GM10248 (cell line): ENCODE measurements at regions of chr5 and their contacts with region 1.

Region 1: GRCh38 chr5:442335-443238 is at the start of gene EXOC3:
- DNase-seq: peak; percentile 95
- CTCF ChIP-seq: no peak

Region 2: DNA sequence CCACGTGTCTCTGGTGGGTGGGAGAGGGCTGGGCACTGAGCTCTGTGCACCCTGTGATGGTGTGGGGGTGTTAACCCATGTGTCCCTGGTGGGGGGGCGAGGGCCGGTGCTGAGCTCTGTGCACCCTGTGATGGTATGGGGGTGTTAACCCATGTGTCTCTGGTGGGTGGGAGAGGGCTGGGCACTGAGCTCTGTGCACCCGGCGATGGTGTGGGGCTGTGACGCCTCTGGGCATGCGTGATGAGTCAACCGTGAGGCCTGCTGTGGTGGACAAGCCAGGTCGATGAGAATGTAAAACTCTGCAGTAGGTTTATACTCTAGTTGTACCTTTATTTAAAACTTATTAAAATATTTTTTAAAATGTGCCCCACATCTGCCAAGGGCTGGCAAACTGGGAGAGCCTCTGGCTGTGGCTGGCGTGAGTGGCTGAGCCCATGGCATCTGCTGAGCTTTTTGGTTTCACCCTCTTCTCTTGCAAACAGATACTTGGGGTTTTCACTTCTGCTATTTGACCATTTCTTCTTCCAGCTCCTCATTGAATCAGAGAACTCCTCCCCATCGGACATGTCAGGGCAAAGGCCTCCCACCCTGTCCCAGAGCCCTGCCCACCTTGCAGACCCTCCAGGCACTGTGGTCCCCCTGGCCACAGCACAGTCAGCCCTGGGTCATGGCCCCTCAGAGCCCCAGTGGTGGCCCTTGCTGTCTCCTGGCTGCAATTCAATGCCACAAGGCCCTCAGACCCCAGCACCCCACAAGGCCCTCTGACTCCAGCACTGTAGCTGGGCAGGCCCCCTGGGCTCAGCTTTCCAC is 18.1 kb before region 1 on chr5:
- CTCF ChIA-PET with region 1: interaction called, 96 read pairs
- POLR2A ChIA-PET with region 1: no interaction called
- DNase-seq: peak; percentile 86
- CTCF ChIP-seq: no peak

Region 3: GRCh38 chr5:431001-431710 is 11.4 kb before region 1 on chr5:
- CTCF ChIA-PET with region 1: interaction called, 96 read pairs
- POLR2A ChIA-PET with region 1: no interaction called
- DNase-seq: peak; percentile 81
- CTCF ChIP-seq: peak; percentile 92

Region 4: GRCh38 chr5:458547-459353 is 16.2 kb after region 1 on chr5:
- CTCF ChIA-PET with region 1: interaction called, 29 read pairs
- POLR2A ChIA-PET with region 1: no interaction called
- DNase-seq: peak; percentile 69
- CTCF ChIP-seq: no peak

Region 5: DNA sequence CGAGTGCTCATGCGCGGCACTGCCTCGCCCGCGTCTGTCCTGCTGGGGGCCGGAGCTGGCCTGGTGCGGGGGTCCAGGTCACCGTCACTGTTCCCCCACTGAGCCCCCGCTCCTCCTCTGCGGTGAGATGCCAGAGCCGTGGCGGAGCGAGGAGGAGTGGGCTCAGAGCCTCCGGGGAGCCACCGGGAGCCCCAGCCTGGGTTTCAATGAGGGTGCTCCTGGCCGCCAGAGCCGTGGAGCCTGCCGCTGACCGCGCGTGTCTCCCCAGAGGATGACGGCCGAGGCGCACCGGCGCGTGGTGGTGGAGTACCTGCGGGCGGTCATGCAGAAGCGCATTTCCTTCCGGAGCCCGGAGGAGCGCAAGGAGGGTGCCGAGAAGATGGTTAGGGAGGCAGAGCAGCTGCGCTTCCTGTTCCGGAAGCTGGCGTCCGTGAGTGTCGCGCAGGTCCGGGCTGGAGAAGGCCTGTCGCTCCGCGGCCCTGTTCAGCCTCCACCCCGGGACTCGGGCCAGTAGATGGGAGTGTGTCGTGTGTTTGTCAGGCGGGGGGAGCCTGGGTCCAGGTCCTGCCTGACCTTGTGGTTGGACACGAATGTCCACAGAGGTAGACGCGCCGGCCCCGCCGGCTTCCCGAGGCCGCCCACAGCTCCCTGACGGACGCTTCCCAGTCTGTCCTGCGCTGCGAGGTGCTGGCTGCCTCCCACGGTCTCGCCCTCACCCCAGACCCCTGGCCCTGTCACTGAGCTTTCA is 22.4 kb after region 1 on chr5:
- CTCF ChIA-PET with region 1: interaction called, 29 read pairs
- POLR2A ChIA-PET with region 1: no interaction called
- DNase-seq: no peak
- CTCF ChIP-seq: no peak

Region 6: DNA sequence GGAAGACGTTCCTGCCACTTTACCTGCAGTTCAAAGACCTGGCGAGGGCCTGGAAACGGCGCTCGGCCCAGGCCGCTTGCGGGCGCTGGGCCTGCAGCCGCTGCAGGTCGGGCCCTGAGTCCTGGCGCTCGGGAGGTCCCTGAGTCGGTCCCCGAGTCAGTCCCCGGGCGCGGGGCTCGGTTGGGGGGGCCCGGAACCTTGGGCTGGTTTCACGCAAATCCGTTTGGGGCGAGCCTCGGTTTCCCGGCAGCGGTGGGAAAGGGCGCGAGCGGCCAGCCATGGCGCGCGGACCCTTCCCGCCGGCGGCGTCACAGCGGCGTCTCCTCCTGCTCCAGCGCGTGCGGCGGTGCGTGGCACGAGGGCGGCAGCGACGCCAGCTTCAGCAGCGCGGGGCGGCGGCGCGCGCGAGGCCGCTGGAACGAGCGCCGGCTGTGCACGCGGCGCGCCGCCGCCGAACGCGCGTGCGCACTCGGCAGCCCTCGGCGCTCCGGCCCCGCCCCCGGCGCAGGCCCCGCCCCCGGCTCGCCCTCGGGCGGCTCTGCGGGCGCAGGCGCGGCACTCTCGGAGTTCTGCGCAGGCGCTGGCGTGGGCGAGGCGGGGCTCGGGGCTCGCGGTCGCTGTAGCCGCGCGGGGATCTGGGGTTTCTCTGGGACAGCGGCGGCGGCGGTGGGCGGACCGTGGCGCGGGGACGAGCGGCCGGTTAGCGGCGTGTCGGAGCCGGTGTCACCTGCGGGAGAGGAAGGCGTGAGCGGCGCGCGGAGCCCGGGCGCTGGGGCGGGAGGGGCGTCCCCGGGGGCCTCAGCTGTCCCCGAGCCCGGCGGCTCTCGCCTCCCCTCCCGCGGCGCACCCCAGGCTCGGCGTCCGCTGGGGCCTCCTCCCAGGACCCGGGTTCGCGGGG is 30.3 kb after region 1 on chr5:
- CTCF ChIA-PET with region 1: interaction called, 22 read pairs
- POLR2A ChIA-PET with region 1: interaction called, 4 read pairs
- DNase-seq: peak; percentile 100
- CTCF ChIP-seq: no peak